K562 (cell line): ENCODE measurements at regions of chr14 and their contacts with region 1.

Region 1: GRCh38 chr14:90288651-90289355 is 32.5 kb downstream of the PSMC1 start:
- DNase-seq: no peak
- ATAC-seq: no peak
- H3K4me3 ChIP-seq: no peak overlapping the region
- H3K27ac ChIP-seq: no peak overlapping the region
- H3K4me1 ChIP-seq: no peaks in the 10 kb centered on the region
- H3K27me3 ChIP-seq: no peaks in the 10 kb centered on the region
- CTCF ChIP-seq: no peak
- EP300 ChIP-seq: no peak
- POLR2A ChIP-seq: no peak
- RAD21 ChIP-seq: no peak

Region 2: GRCh38 chr14:90276646-90277367 is 12.0 kb before region 1 on chr14:
- CTCF ChIA-PET with region 1: no interaction called
- POLR2A ChIA-PET with region 1: interaction called, 10 read pairs
- in situ Hi-C with region 1: no loop called
- intact Hi-C with region 1: no loop called
- DNase-seq: peak in 2 of 4 experiments; percentile 10 to 16
- ATAC-seq: no peak; the same call in 1 of the 3 replicates
- H3K4me3 ChIP-seq: no peak overlapping the region
- H3K27ac ChIP-seq: no peak overlapping the region
- H3K4me1 ChIP-seq: peaks cover 0 to 4% of the 10 kb centered on the region in 2 experiments; a peak in 2 of 5 replicates
- H3K27me3 ChIP-seq: no peaks in the 10 kb centered on the region
- CTCF ChIP-seq: no peak
- EP300 ChIP-seq: no peak
- POLR2A ChIP-seq: no peak
- RAD21 ChIP-seq: no peak

Region 3: DNA sequence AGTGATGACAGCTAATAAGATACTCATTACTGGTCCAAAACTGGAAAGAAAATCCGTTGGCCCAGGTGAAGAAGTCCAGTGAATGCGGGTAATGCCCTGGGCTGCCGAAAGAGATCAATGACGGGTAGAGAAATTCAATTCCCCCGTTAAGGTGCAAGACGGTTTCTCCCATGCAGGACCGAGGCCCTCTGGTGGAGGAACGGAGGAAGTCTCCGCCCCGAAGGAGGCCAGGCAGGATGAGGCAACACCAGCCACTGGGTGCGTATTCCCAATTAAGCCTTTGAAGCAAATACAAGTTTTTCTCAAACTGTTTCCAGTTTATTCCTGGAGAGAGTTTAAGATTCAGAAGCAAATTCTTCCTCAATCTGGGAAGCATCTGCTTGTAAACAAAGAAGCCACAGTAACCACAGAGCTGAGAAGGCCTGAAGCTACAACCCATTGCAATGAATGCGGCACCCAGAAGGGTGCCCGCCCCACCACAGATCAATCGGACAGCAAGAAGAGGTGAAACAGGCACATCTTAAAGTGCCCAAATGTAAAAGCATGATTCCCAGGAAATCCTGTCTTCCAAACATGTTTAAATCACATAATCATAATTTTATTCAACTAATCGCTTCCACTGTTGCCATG is 408.9 kb after region 1 on chr14:
- CTCF ChIA-PET with region 1: no interaction called
- POLR2A ChIA-PET with region 1: no interaction called
- in situ Hi-C with region 1: no loop called
- intact Hi-C with region 1: loop called (anchors 5 kb)
- DNase-seq: peak; percentile 71 to 75 (median 72)
- ATAC-seq: peak; percentile 98
- H3K4me3 ChIP-seq: no peak overlapping the region
- H3K27ac ChIP-seq: no peak overlapping the region
- H3K4me1 ChIP-seq: peaks cover 0 to 2% of the 10 kb centered on the region in 2 experiments; a peak in 2 of 5 replicates
- H3K27me3 ChIP-seq: no peaks in the 10 kb centered on the region
- CTCF ChIP-seq: peak; percentile 72 to 81 (median 78)
- EP300 ChIP-seq: no peak
- POLR2A ChIP-seq: no peak
- RAD21 ChIP-seq: peak; percentile 68 to 77